ENCODE measurements at regions of chr3 and their contacts with region 1.

Region 1: DNA sequence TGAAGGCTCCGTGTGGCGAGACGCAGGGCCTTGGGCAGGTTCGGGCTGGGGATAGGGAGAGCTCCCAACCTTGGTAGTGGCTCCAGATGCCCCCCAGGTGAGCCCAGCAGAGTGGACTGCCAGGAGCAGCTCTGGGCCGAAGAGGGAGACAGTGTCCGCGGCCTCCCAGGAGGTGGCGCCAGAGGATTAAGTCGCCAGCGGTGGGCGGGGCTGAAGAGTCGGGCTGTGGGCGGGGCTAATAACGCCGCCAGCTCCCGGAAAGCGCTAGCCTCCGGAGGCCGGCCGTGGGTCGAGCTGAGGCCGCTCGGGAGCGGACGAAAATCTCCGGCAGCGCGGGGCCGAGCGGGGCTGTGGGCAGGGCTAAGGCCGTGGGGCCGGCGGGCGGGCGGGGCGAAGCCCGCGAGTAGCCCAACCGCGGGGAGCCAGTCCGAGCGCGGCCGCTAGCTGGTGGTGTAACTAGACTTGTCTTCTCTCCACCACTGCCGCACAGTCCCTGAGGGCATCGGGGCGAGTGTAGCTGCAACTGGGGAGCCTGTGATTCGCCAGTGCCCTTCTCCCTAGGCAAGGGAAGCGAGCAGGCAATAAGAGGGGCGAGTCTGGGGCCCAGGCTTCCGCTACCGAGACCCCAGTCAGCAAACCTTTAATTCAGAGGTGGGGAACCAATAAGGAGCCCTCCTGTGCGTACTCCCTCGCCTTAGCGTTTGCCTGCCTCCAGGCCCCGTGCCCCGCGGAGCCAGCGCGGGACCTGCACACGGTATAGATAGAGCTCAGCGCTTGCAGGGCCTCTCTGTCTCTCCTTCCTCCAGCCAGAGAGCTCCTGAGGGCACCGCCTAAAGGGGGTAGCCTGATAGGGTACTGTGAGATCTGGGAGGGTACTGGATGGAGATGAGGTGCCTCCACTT is 14.4 kb upstream of the BSN start:
- DNase-seq: peak; percentile 90 to 96
- ATAC-seq: peak; percentile 97

Region 2: DNA sequence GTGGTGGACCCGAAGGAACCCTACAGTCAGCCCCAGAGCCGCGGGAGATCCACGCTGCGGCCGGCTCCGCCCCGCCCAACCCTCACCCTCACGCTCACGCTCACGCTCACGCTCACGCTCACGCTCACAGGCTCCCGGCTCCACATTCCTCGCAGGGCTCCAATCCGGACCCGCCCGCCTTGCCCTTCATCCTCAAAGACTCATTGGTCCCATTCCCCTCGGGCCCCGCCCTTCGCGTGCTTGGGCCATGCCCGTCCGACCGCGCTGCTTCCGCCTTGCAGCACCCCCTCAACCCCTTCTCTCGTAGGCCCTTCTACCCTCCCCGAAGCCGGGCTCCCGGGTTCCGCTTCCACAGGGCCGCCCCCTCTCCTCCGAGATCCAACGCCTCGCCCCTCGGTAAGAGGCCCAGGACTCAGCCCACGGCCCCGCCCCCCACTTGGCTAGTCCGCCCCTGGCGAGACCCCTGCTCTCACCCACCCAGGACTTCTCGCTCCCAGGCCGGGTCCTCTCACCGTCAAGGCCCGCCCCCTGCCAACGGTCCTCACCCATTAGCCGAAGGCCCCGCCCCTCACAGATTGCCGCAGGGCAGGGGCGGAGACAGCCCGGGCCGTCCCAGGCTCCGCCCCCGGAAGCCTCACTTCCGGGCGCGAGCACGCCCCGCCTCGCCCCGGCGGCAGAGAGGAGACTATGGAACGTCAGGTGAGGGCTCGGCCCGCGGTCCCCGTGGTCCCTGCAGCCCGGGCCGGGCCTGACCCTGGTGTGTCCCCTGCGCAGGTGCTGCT is 134.0 kb after region 1 on chr3 and contains the start of gene APEH:
- intact Hi-C with region 1: loop called (anchors 5 to 10 kb)
- DNase-seq: peak; percentile 98 to 99
- ATAC-seq: peak; percentile 86
- total RNA-seq, gene APEH: 153 to 182 TPM

Measured in left colon (tissue), 2 donors.